Calu3 (cell line): ENCODE measurements at regions of chr14 and their contacts with region 1.

Region 1: GRCh38 chr14:103372603-103373304 is 12.5 kb upstream of the MARK3 start:
- DNase-seq: peak; percentile 68
- H3K4me3 Mint-ChIP-seq: peak overlapping the region; percentile 24
- H3K27ac Mint-ChIP-seq: no peak overlapping the region
- H3K4me1 Mint-ChIP-seq: peaks cover 10% of the 10 kb centered on the region
- H3K27me3 Mint-ChIP-seq: no peaks in the 10 kb centered on the region
- CTCF ChIP-seq: no peak

Region 2: DNA sequence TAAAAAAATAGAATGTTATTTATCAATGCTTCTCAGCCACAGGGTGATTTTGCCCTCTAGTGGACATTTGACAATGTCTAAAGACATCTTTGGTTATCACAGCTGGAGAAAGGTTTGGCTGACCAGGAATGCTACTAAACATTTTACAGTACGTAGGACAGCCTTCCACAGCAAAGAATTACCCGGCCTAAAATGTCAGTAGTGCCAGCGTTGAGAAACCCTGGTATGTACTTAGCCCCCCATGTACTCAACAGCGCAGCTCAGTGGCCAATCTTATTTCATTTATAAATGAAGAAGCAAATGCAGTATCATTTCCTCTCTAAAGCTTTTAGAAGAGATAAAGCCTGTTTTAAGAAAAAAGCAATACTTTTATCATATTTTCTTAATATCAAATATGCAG is 18.3 kb after region 1 on chr14:
- CTCF ChIA-PET with region 1: interaction called, 10 read pairs
- intact Hi-C with region 1: no loop called
- DNase-seq: peak; percentile 18
- H3K4me3 Mint-ChIP-seq: no peak overlapping the region
- H3K27ac Mint-ChIP-seq: no peak overlapping the region
- H3K4me1 Mint-ChIP-seq: peaks cover 16% of the 10 kb centered on the region
- H3K27me3 Mint-ChIP-seq: no peaks in the 10 kb centered on the region
- CTCF ChIP-seq: peak; percentile 63

Region 3: GRCh38 chr14:103825101-103825500 is 452.3 kb after region 1 on chr14:
- CTCF ChIA-PET with region 1: interaction called, 10 read pairs
- intact Hi-C with region 1: no loop called
- DNase-seq: peak; percentile 24
- H3K4me3 Mint-ChIP-seq: peak overlapping the region; percentile 44
- H3K27ac Mint-ChIP-seq: peak overlapping the region; percentile 56
- H3K4me1 Mint-ChIP-seq: peaks cover 34% of the 10 kb centered on the region
- H3K27me3 Mint-ChIP-seq: no peaks in the 10 kb centered on the region
- CTCF ChIP-seq: no peak